K562 (cell line): ENCODE measurements at regions of chr22 and their contacts with region 1.

Region 1: GRCh38 chr22:20568989-20569769 is 61.8 kb downstream of the MED15 start:
- DNase-seq: no peak
- ATAC-seq: no peak
- H3K4me3 ChIP-seq: no peak overlapping the region
- H3K27ac ChIP-seq: no peak overlapping the region
- H3K4me1 ChIP-seq: peaks cover under 1 to 9% of the 10 kb centered on the region in 2 experiments; a peak in 3 of 5 replicates
- H3K27me3 ChIP-seq: no peaks in the 10 kb centered on the region
- CTCF ChIP-seq: no peak; a peak in 1 of 6 replicates
- EP300 ChIP-seq: no peak
- POLR2A ChIP-seq: no peak
- RAD21 ChIP-seq: no peak

Region 2: GRCh38 chr22:20305931-20306645 is 263.1 kb before region 1 on chr22:
- CTCF ChIA-PET with region 1: no interaction called
- POLR2A ChIA-PET with region 1: no interaction called
- in situ Hi-C with region 1: no loop called
- intact Hi-C with region 1: no loop called
- DNase-seq: peak; percentile 23 to 57 (median 52)
- ATAC-seq: no peak; the same call in 2 of the 3 replicates
- H3K4me3 ChIP-seq: no peak overlapping the region
- H3K27ac ChIP-seq: no peak overlapping the region
- H3K4me1 ChIP-seq: peaks cover 0 to 31% of the 10 kb centered on the region in 2 experiments; a peak in 2 of 5 replicates
- H3K27me3 ChIP-seq: peaks cover 49 to 86% of the 10 kb centered on the region in 2 experiments; a peak in 4 of 5 replicates
- CTCF ChIP-seq: no peak
- EP300 ChIP-seq: no peak
- POLR2A ChIP-seq: no peak
- RAD21 ChIP-seq: no peak

Region 3: DNA sequence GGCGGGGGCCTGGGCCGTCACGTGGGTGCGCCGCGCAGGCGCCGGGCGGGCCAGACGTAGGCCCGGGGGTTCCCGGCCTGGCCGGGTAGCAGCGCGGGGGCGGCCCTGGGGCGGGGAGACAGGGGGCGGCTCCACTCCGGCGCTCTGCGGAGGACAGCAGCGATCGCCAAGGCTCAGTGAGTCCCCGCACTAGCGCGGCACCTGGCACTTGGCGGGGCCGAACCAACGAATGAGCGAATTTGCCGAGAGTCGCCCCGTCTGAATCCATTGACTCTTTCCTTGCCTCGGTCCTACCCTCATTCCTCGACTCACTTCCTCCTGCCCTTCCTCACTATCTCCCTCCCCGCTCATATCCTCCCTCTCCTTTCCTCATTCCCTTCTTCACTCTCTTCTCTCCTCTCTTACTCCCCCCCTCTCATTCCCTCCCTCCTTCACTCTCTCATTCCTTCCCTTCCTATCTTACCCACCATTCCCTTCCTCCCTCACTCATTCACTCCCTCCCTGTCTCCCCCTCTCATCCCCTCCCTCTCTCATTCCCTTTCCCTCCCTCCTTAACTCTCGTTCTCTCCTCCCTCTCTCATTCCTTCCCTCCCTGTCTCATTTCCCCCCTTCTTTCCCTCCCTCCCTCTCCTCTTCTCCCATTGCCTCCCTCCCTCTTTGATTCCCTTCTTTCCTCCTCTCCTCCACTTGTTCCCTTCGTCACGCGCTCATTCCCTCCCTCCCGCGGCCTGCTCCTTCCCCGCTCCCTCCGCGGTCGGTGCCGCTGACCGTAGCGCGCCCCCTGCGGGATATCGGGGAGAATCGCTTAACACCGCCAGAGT is 73.1 kb before region 1 on chr22:
- CTCF ChIA-PET with region 1: interaction called, 10 read pairs
- POLR2A ChIA-PET with region 1: interaction called, 1,693 read pairs
- in situ Hi-C with region 1: no loop called
- intact Hi-C with region 1: no loop called
- DNase-seq: peak; percentile 100
- ATAC-seq: peak; percentile 97
- H3K4me3 ChIP-seq: peak overlapping the region; percentile 46
- H3K27ac ChIP-seq: peak overlapping the region; percentile 81
- H3K4me1 ChIP-seq: peaks cover 15 to 40% of the 10 kb centered on the region in 2 experiments
- H3K27me3 ChIP-seq: no peaks in the 10 kb centered on the region; a peak in 1 of 5 replicates
- CTCF ChIP-seq: peak; percentile 99 to 100 (median 99)
- EP300 ChIP-seq: peak; percentile 77
- POLR2A ChIP-seq: no peak
- RAD21 ChIP-seq: peak; percentile 92 to 98

Region 4: GRCh38 chr22:20523086-20523983 is 45.8 kb before region 1 on chr22:
- CTCF ChIA-PET with region 1: interaction called, 3 read pairs
- POLR2A ChIA-PET with region 1: interaction called, 1,693 read pairs
- in situ Hi-C with region 1: no loop called
- intact Hi-C with region 1: loop called (anchors 2 kb)
- DNase-seq: peak; percentile 76 to 92 (median 80)
- ATAC-seq: peak; percentile 78
- H3K4me3 ChIP-seq: no peak overlapping the region
- H3K27ac ChIP-seq: peak overlapping the region; percentile 43
- H3K4me1 ChIP-seq: peaks cover 43 to 49% of the 10 kb centered on the region in 2 experiments
- H3K27me3 ChIP-seq: no peaks in the 10 kb centered on the region
- CTCF ChIP-seq: no peak; a peak in 1 of 6 replicates
- EP300 ChIP-seq: peak; percentile 95
- POLR2A ChIP-seq: no peak
- RAD21 ChIP-seq: peak in 1 of 2 experiments; percentile 39; a peak in 1 of 4 replicates

Region 5: DNA sequence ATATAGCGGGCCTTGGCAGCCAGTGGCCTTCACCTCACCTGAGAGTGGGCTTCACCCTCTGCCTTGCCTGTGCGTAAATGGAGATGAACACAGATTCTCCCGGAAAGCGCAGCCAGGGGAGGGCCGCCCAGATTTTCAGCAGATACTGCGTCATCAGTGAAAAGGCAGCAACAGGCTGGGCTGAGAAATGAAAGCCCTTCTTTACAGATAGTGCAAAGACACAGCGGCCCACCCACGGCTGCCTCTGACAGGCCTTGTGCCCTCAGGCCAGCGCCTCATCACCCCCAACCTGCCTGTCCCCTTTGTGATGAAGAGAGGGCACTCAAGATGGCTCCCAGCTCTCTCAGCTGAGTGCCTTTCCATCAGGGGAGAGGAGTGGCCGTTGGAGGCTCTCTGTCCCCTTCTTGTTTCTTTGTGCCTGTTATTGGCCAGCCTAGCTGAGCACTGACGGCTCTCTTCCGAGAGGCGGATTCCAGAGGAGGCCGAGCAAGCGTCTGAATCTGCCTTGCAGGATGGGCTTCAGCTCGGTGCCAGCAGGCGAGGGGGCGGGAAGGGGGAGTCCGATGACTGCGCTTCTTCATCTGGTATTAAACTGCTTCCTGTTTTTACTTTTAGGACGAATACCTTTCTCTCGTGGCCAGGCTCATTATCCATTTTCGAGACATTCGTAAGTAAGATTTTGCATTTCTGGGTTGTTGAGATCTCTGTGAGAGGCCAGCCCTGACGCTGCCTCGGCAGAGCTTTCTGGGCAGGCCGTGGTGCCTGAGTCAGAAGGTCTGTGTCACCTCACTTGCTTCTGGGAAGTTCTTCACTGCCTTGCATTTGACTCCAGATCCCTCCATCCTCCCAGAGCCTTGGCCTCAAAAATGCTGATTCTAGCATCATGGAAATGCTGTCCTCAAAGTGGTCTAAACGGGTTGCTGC is 18.1 kb before region 1 on chr22:
- CTCF ChIA-PET with region 1: interaction called, 4 read pairs
- POLR2A ChIA-PET with region 1: interaction called, 186 read pairs
- in situ Hi-C with region 1: no loop called
- intact Hi-C with region 1: no loop called
- DNase-seq: no peak
- ATAC-seq: no peak
- H3K4me3 ChIP-seq: no peak overlapping the region
- H3K27ac ChIP-seq: no peak overlapping the region
- H3K4me1 ChIP-seq: peaks cover 22 to 33% of the 10 kb centered on the region in 2 experiments
- H3K27me3 ChIP-seq: no peaks in the 10 kb centered on the region
- CTCF ChIP-seq: no peak
- EP300 ChIP-seq: no peak
- POLR2A ChIP-seq: no peak
- RAD21 ChIP-seq: no peak

Region 6: GRCh38 chr22:20583471-20583922 is 14.3 kb after region 1 on chr22:
- CTCF ChIA-PET with region 1: interaction called, 13 read pairs
- POLR2A ChIA-PET with region 1: interaction called, 21 read pairs
- in situ Hi-C with region 1: no loop called
- intact Hi-C with region 1: no loop called
- DNase-seq: peak in 1 of 4 experiments; percentile 70
- ATAC-seq: peak; percentile 31
- H3K4me3 ChIP-seq: no peak overlapping the region
- H3K27ac ChIP-seq: no peak overlapping the region
- H3K4me1 ChIP-seq: peaks cover 0 to 63% of the 10 kb centered on the region in 2 experiments; a peak in 2 of 5 replicates
- H3K27me3 ChIP-seq: no peaks in the 10 kb centered on the region
- CTCF ChIP-seq: peak; percentile 74 to 87 (median 79)
- EP300 ChIP-seq: no peak
- POLR2A ChIP-seq: no peak
- RAD21 ChIP-seq: peak in 1 of 2 experiments; percentile 57; a peak in 2 of 4 replicates

Region 7: GRCh38 chr22:20741634-20742581 is 172.7 kb after region 1 on chr22:
- CTCF ChIA-PET with region 1: interaction called, 24 read pairs
- POLR2A ChIA-PET with region 1: interaction called, 3 read pairs
- in situ Hi-C with region 1: no loop called
- intact Hi-C with region 1: loop called (anchors 5 kb)
- DNase-seq: peak; percentile 87 to 93 (median 90)
- ATAC-seq: peak; percentile 78
- H3K4me3 ChIP-seq: no peak overlapping the region
- H3K27ac ChIP-seq: no peak overlapping the region
- H3K4me1 ChIP-seq: no peaks in the 10 kb centered on the region
- H3K27me3 ChIP-seq: no peaks in the 10 kb centered on the region
- CTCF ChIP-seq: peak; percentile 94 to 100 (median 99)
- EP300 ChIP-seq: no peak
- POLR2A ChIP-seq: no peak
- RAD21 ChIP-seq: peak; percentile 54 to 86